ENCODE measurements at regions of chr13 and their contacts with region 1.

Region 1: DNA sequence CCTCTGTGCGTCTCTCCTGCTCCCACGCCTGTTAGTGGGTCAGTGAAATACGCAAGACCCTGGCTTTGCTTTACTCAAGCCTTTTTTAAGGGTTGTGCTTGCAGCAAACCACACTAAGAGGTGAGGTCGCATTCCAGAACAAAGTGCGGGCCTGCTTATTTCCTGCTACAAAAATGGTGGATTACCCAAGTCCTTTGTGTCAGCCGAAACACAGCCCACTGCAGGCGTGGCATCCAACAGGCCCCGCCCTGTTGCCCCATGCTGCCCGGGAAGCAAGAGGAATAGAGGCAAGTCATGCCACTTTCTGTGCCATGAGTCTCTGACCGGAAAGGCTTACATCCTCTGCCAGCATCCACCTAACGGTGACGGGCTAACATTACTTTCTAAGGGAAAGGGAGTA is 7.7 kb upstream of the IRS2 start:
- DNase-seq: no peak
- ATAC-seq: no peak
- H3K4me3 ChIP-seq: no peak overlapping the region
- H3K27ac ChIP-seq: no peak overlapping the region
- H3K4me1 ChIP-seq: peaks cover 7% of the 10 kb centered on the region
- H3K27me3 ChIP-seq: peaks cover 0 to 15% (median 2%) of the 10 kb centered on the region in 3 donors
- CTCF ChIP-seq: no peak

Region 2: GRCh38 chr13:109779074-109779473 is 15.0 kb before region 1 on chr13:
- intact Hi-C with region 1: loop called in 1 of 2 experiments (anchors 1 kb)
- DNase-seq: no peak
- ATAC-seq: no peak
- H3K4me3 ChIP-seq: peak overlapping the region; percentile 64
- H3K27ac ChIP-seq: no peak overlapping the region
- H3K4me1 ChIP-seq: peaks cover 51% of the 10 kb centered on the region
- H3K27me3 ChIP-seq: peaks cover 0 to 2% (median 0%) of the 10 kb centered on the region in 3 donors
- CTCF ChIP-seq: no peak

Region 3: DNA sequence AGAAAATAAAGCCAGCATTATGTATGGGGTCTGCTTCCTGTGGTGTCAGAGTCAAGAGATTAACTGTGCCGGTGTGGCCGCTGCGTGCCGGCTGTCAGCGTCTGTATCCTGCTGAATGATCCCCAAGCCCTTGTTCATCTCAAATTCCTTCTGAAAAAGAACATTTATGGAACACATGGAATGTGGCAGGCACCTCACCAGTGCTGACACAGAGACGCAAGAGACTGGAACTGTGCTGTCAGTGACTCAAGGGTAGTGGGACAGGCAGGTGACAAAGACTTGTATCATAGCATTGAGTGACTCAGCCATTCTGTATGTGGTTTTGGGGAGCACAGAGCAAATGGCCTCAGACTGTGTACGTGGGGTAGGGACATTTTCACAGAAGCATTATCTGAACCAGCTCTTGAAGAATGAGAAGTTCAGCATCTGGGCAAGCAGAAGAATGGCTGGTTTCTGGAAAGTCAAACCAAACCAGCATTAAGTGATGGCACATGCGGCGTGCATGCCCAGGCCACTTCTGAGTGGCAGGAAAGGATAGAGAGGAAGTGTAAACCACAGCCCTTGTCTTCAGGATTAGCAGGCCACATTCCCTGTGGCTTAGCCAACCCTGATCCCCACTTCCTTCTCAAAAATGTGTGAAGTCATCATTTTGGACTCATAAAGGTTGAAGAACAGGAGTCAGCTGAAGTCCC is 46.3 kb after region 1 on chr13:
- intact Hi-C with region 1: loop called in 1 of 2 experiments (anchors 2 kb)
- DNase-seq: no peak
- ATAC-seq: peak; percentile 66 to 94 (median 84)
- H3K4me3 ChIP-seq: no peak overlapping the region
- H3K27ac ChIP-seq: no peak overlapping the region
- H3K4me1 ChIP-seq: peaks cover 4% of the 10 kb centered on the region
- H3K27me3 ChIP-seq: peaks cover 0 to 5% (median 0%) of the 10 kb centered on the region in 3 donors
- CTCF ChIP-seq: no peak

Region 4: GRCh38 chr13:110412132-110412914 is 618.2 kb after region 1 on chr13:
- intact Hi-C with region 1: no loop called
- DNase-seq: peak; percentile 86 to 91
- ATAC-seq: peak; percentile 83 to 92 (median 85)
- H3K4me3 ChIP-seq: peak overlapping the region; percentile 4
- H3K27ac ChIP-seq: peak overlapping the region; percentile 82
- H3K4me1 ChIP-seq: peaks cover 38% of the 10 kb centered on the region
- H3K27me3 ChIP-seq: no peaks in the 10 kb centered on the region
- CTCF ChIP-seq: peak; percentile 80

Measured in psoas muscle (tissue), 8 donors.